Sciatic nerve (tissue), 2 donors: ENCODE measurements at regions of chr17 and their contacts with region 1.

Region 1: DNA sequence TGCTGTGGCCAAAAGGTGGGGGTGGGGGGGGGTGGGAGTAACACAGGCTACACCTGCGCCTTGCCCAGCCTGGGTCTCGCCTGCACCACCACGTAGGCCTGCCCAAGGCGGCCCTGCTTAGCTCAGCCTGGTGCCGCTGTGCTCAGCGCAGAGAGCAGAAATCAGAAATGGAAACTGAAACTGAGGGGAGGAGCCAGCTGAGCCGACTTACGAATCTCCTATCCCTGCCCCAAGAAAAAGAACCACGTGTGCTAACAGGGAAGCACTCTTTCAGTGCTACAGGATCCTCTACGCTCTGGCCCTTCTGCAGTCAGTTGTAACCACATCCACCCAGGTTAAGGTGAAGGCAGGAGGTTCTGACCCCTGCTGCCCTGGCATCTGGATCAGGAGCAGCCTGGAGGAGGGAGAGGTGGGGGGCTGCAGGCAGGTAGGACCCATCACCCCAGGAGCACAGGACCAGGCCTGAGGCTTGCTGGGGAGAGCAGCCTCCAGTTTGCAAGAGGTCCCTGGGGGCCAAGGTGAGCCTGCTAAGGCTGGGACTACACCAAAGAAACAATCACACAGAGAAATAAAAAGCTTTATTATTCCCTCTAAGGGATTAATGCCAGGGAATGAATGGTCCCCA is at the start of gene DHX58:
- DNase-seq: peak; percentile 86
- ATAC-seq: peak; percentile 94
- total RNA-seq, gene DHX58: 24.8 TPM

Region 2: GRCh38 chr17:41966463-41967140 is 146.1 kb before region 1 on chr17 and contains the start of gene CNP:
- intact Hi-C with region 1: loop called (anchors 5 kb)
- DNase-seq: peak; percentile 95
- ATAC-seq: peak; percentile 93
- total RNA-seq, gene CNP: 393 TPM

Region 3: DNA sequence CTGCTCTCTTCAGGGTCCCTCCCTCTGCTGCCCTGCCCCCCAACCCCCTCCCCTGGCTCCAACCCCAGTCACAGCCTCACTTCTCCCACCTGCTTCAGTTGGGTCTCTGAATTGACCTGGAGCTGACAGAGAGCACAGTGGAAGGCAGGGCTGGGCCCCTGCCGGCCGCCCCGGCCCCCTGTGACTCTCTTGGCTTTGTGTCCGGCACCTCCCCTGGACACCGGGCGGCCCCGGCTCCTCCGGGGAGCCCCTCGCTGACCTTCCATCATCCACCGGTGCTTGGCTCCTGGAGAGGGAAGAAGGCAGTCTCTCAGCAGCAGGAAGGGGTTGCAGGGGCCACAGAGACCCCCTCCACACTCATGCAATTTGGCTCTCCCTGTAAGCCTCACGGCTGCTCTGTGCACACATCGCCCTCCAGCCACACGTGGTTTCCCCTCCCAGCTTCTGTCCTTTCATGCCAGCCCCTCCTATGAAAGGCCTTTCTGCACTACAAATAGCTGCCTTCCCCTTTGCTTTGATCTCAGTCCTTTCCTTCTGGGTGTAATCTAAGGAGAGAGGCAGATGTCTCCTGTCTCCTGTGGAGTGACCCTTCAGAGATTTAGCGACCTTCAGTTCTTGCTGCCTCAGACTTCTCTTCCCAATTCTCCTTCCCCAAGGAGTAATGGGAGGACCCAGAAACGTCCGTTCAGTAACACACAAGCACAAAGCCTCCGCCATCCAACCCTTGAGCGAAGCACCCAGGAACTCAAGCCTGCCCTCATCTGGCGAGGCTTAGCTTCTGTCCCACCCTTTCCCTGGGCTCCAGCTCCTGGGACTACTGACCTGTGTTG is 84.5 kb before region 1 on chr17:
- intact Hi-C with region 1: loop called (anchors 5 kb)
- DNase-seq: no peak
- ATAC-seq: no peak

Region 4: DNA sequence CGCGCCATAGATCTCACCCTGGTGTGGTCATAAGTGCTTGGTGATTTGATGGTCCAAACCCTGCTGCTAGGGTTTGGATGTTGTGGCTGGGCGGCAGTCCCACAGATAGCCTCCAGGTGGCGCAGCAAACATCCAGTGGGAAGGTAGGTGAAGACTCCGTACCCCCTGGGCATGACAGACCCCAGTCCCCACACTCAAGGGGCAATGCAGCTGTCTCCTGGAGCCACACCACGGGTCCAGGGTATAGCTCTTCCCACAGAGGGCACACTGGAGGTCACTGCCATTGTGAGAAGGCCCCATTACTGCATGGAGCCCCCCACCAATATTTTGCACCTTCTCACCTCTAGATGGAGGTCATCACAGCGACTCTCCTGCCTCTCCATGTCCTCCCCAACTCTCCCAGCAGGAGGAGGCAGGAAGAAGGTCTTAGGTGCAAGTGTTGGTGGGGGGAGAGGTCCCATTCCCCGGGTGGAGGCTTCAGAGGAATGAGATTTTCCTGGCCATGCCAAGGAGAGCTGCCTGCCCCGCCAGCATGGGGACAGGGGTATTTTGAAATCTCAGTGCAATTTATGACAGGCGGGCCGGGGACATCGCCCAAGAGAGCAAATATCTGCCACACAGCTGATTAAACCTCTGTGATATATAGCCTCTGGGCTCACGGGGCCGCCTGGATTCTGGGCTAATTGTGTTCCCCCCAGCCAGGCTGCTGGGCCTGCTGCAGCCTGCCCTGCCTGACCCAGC is 45.1 kb before region 1 on chr17:
- intact Hi-C with region 1: loop called (anchors 5 kb)
- DNase-seq: peak; percentile 87
- ATAC-seq: peak; percentile 63